ENCODE measurements at regions of chr3 and their contacts with region 1.

Region 1: DNA sequence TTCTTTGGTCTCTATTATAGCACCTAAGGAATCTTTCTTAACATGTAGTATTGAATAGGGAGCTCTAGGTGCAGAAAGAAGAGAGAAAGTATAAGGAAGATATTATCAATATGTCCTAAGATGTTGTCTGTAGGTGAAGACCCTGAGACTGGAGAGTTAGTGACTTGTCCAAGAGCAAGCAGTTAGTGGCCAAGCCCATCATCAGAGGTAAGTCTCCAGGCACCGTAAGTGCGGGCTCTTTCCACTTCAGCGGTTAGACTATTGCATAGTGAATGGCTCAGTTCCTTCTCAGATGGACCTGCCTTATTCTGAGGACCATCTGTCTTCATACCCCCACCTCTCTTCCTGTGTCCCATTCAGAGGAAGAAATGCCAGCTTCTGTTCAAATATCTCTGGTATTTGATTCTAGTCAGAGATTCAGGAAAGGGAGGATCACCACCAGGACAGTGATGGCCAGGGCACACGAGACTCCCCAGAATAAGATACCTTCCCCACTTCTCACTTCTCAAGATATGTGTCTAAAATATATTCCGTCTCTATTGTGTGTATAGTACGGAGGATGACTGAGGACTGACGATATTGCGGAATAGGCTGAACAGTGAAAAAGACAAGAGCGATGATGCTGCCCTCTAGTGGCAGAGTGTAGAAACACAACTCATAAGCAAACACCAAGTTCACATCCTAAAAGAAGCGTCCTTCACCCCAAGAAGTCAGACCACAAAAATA is 19.1 kb upstream of the ADGRG7 start:
- DNase-seq: peak in 34 of 35 experiments; percentile 17 to 84 (median 42)
- ATAC-seq: peak; percentile 80 to 86 (median 82)
- H3K4me3 ChIP-seq: no peak overlapping the region
- H3K4me3 Mint-ChIP-seq: peak overlapping the region in 2 of 3 donors; percentile 1 to 37
- H3K27ac ChIP-seq: no peak overlapping the region
- H3K27ac Mint-ChIP-seq: no peak overlapping the region
- H3K4me1 ChIP-seq: peaks cover 0 to 2% of the 10 kb centered on the region in 2 experiments
- H3K4me1 Mint-ChIP-seq: peaks cover 3 to 7% (median 5%) of the 10 kb centered on the region in 3 donors
- H3K27me3 ChIP-seq: no peaks in the 10 kb centered on the region
- H3K27me3 Mint-ChIP-seq: no peaks in the 10 kb centered on the region

Region 2: GRCh38 chr3:100316641-100317069 is 273.6 kb before region 1 on chr3:
- CTCF ChIA-PET with region 1: interaction called, 7 to 11 read pairs
- POLR2A ChIA-PET with region 1: no interaction called
- DNase-seq: peak in 20 of 35 experiments; percentile 5 to 75 (median 22)
- ATAC-seq: peak; percentile 56 to 80 (median 67)
- H3K4me3 ChIP-seq: no peak overlapping the region
- H3K4me3 Mint-ChIP-seq: peak overlapping the region in 2 of 3 donors; percentile 13 to 21
- H3K27ac ChIP-seq: no peak overlapping the region
- H3K27ac Mint-ChIP-seq: no peak overlapping the region
- H3K4me1 ChIP-seq: peaks cover 0 to 3% of the 10 kb centered on the region in 2 experiments
- H3K4me1 Mint-ChIP-seq: peaks cover 8 to 14% (median 11%) of the 10 kb centered on the region in 3 donors
- H3K27me3 ChIP-seq: no peaks in the 10 kb centered on the region
- H3K27me3 Mint-ChIP-seq: no peaks in the 10 kb centered on the region